A549 (cell line): ENCODE measurements at regions of chr2 and their contacts with region 1.

Region 1: GRCh38 chr2:64831134-64831976 is 157.8 kb upstream of the SLC1A4 start:
- DNase-seq: peak; percentile 97 to 98
- ATAC-seq: peak; percentile 95 to 97
- H3K4me3 ChIP-seq: peak overlapping the region; percentile 11; the same call in 1 of the 3 replicates
- H3K27ac ChIP-seq: peak overlapping the region; percentile 65 to 89
- H3K4me1 ChIP-seq: peaks cover 36% of the 10 kb centered on the region
- CTCF ChIP-seq: peak; percentile 95
- EP300 ChIP-seq: peak; percentile 22 to 59; a peak in 2 of 5 replicates
- POLR2A ChIP-seq: no peak
- RAD21 ChIP-seq: peak; percentile 68 to 71

Region 2: GRCh38 chr2:64782051-64782390 is 49.3 kb before region 1 on chr2:
- CTCF ChIA-PET with region 1: interaction called, 15 read pairs
- POLR2A ChIA-PET with region 1: no interaction called
- DNase-seq: no peak
- ATAC-seq: no peak
- H3K4me3 ChIP-seq: no peak overlapping the region
- H3K27ac ChIP-seq: no peak overlapping the region
- H3K4me1 ChIP-seq: peaks cover 13% of the 10 kb centered on the region
- CTCF ChIP-seq: no peak
- EP300 ChIP-seq: no peak
- POLR2A ChIP-seq: no peak
- RAD21 ChIP-seq: no peak

Region 3: DNA sequence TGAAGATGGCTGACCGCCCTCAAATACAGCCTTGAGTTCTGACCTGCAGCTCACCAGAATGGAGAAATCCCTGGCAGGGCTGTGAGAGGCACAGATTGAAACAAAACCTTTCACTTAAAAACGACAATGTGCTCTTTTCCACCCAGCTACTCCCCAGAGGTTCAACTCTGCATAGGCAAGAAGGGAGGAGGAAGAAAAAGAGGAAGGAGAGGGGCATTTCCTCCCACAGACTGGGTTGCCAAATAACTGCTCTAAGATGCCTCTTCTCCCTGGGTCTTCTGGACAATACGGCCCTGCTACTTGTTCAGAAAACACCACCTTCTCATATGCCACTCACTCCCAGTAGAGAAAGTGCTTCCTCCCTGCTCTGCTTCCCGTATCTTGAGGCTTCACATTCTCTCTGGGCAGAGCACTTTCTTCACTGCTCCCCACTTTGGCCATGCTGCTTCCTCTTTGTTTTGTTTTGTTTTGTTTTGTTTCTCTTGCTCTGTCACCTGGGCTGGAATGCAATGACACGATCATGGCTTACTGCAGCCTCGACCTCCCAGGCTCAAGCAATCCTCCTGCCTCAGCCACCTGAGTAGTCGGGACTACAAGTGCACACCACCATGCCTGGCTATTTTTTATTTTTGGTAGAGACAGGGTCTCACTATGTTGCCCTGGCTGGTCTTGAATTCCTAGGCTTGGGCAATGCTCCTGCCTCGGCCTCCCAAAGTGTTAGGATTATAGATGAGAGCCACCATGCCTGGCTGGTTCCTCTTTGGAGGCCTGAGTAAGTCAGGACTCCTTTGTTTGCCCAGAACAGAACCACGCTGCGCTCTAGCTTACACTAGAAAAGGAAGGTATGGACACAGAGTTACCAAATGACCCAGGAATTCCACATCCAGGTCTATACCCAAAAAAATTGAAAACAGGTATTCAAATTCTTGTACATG is 21.7 kb after region 1 on chr2:
- CTCF ChIA-PET with region 1: interaction called, 29 read pairs
- POLR2A ChIA-PET with region 1: no interaction called
- DNase-seq: no peak
- ATAC-seq: no peak
- H3K4me3 ChIP-seq: no peak overlapping the region
- H3K27ac ChIP-seq: no peak overlapping the region
- H3K4me1 ChIP-seq: peaks cover 6% of the 10 kb centered on the region; the same call in 1 of the 3 replicates
- CTCF ChIP-seq: no peak
- EP300 ChIP-seq: no peak
- POLR2A ChIP-seq: no peak
- RAD21 ChIP-seq: no peak

Region 4: GRCh38 chr2:64859312-64860212 is 28.2 kb after region 1 on chr2:
- CTCF ChIA-PET with region 1: interaction called, 29 read pairs
- POLR2A ChIA-PET with region 1: interaction called, 5 read pairs
- DNase-seq: peak; percentile 83 to 93
- ATAC-seq: peak; percentile 83 to 89
- H3K4me3 ChIP-seq: peak overlapping the region; percentile 43
- H3K27ac ChIP-seq: peak overlapping the region; percentile 81 to 90
- H3K4me1 ChIP-seq: peaks cover 26% of the 10 kb centered on the region
- CTCF ChIP-seq: peak; percentile 28; the same call in 2 of the 3 replicates
- EP300 ChIP-seq: no peak
- POLR2A ChIP-seq: peak; percentile 59
- RAD21 ChIP-seq: peak; percentile 1 to 22; a peak in 3 of 5 replicates

Region 5: GRCh38 chr2:64932371-64933216 is 101.2 kb after region 1 on chr2:
- CTCF ChIA-PET with region 1: no interaction called
- POLR2A ChIA-PET with region 1: no interaction called
- DNase-seq: no peak
- ATAC-seq: no peak
- H3K4me3 ChIP-seq: no peak overlapping the region
- H3K27ac ChIP-seq: no peak overlapping the region
- H3K4me1 ChIP-seq: no peaks in the 10 kb centered on the region
- CTCF ChIP-seq: no peak
- EP300 ChIP-seq: no peak
- POLR2A ChIP-seq: no peak
- RAD21 ChIP-seq: no peak